K562 (cell line): ENCODE measurements at regions of chr1 and their contacts with region 1.

Region 1: GRCh38 chr1:116411784-116412479 is 38.9 kb downstream of the ATP1A1 start:
- DNase-seq: no peak
- ATAC-seq: no peak
- H3K4me3 ChIP-seq: no peak overlapping the region
- H3K27ac ChIP-seq: no peak overlapping the region
- H3K4me1 ChIP-seq: peaks cover 41 to 83% of the 10 kb centered on the region in 2 experiments
- H3K27me3 ChIP-seq: no peaks in the 10 kb centered on the region
- CTCF ChIP-seq: no peak
- EP300 ChIP-seq: no peak
- POLR2A ChIP-seq: no peak
- RAD21 ChIP-seq: no peak

Region 2: GRCh38 chr1:116360429-116361173 is 51.3 kb before region 1 on chr1:
- CTCF ChIA-PET with region 1: no interaction called
- POLR2A ChIA-PET with region 1: no interaction called
- in situ Hi-C with region 1: no loop called
- intact Hi-C with region 1: no loop called
- DNase-seq: peak; percentile 39 to 59 (median 50)
- ATAC-seq: peak; percentile 65
- H3K4me3 ChIP-seq: no peak overlapping the region
- H3K27ac ChIP-seq: no peak overlapping the region
- H3K4me1 ChIP-seq: no peaks in the 10 kb centered on the region; a peak in 1 of 5 replicates
- H3K27me3 ChIP-seq: peaks cover 3 to 5% of the 10 kb centered on the region in 2 experiments; a peak in 3 of 5 replicates
- CTCF ChIP-seq: peak; percentile 31 to 75 (median 32); a peak in 3 of 6 replicates
- EP300 ChIP-seq: no peak
- POLR2A ChIP-seq: no peak
- RAD21 ChIP-seq: peak; percentile 52 to 87

Region 3: GRCh38 chr1:116397728-116398127 is 14.2 kb before region 1 on chr1:
- CTCF ChIA-PET with region 1: no interaction called
- POLR2A ChIA-PET with region 1: interaction called, 13 read pairs
- in situ Hi-C with region 1: no loop called
- intact Hi-C with region 1: no loop called
- DNase-seq: no peak
- ATAC-seq: no peak
- H3K4me3 ChIP-seq: no peak overlapping the region
- H3K27ac ChIP-seq: no peak overlapping the region
- H3K4me1 ChIP-seq: peaks cover 0 to 11% of the 10 kb centered on the region in 2 experiments; a peak in 3 of 5 replicates
- H3K27me3 ChIP-seq: no peaks in the 10 kb centered on the region
- CTCF ChIP-seq: no peak
- EP300 ChIP-seq: no peak
- POLR2A ChIP-seq: no peak
- RAD21 ChIP-seq: no peak